ENCODE measurements at regions of chr2 and their contacts with region 1.

Region 1: DNA sequence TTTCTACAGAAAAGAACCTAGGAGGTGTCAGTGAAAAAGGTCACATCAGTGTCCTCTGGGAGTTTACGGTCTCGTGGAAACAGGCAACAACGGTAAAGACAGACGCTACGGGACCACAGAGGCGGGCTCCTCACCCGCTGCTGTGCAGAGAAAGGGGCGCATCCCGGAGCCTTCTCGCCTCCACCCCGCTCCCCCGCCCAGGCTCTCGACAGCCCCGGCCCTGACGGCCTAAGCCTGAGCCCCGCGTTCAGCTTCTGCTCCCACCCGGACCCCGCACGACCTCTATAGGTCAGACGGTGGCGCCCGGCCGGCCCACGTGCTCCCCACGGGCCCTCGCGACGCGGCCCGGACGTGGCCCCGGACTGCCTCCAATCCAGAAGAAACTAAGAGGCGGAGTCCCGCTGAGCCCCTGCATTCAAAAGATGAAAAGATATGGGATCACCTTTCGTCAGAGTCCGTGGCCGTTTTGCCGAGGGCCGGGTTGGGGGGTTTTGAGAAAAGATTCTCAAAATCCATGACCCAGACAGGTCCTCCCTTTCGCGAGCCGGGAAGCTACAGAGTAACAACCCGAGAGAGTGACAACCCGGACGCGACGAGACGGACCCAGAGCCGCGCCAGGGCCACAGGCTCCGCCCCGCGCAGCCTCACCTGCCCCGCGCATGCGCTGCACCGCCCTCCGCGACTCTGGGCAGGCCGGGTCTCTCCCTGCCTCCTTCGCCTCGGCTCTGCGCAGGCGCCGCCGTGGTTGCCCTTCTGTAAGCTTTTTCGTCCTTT is at the start of gene ZC3H8:
- DNase-seq: peak; percentile 93 to 98 (median 96)
- ATAC-seq: peak; percentile 97 to 99 (median 99)
- H3K4me3 ChIP-seq: peak within 1 kb of the TSS; percentile 27 to 91 (median 74)
- H3K27ac ChIP-seq: peak within 1 kb of the TSS; percentile 37 to 93 (median 85)
- H3K4me1 ChIP-seq: peaks cover 0 to 32% (median 12%) of the 10 kb centered on the region in 12 donors
- H3K27me3 ChIP-seq: no peaks in the 10 kb centered on the region
- CTCF ChIP-seq: peak in 2 of 12 donors; percentile 6 to 16
- POLR2A ChIP-seq: peak; percentile 40 to 89
- total RNA-seq, gene ZC3H8: 5.1 to 12.2 (median 8.1) TPM

Region 2: GRCh38 chr2:111897924-111898702 is 356.5 kb before region 1 on chr2 and contains the start of gene MERTK:
- intact Hi-C with region 1: loop called in 2 of 10 experiments (anchors 10 kb)
- DNase-seq: peak; percentile 90 to 95 (median 91)
- ATAC-seq: peak; percentile 90 to 95 (median 94)
- H3K4me3 ChIP-seq: peak within 1 kb of the TSS; percentile 52 to 98 (median 89)
- H3K27ac ChIP-seq: peak within 1 kb of the TSS; percentile 61 to 95 (median 92)
- H3K4me1 ChIP-seq: peaks cover 0 to 46% (median 20%) of the 10 kb centered on the region in 12 donors
- H3K27me3 ChIP-seq: no peaks in the 10 kb centered on the region
- CTCF ChIP-seq: peak; percentile 32 to 86 (median 67)
- POLR2A ChIP-seq: peak in 1 of 2 donors; percentile 65
- total RNA-seq, gene MERTK: 1.9 to 15.2 (median 4.9) TPM

Region 3: GRCh38 chr2:112121682-112122254 is 132.9 kb before region 1 on chr2:
- intact Hi-C with region 1: loop called in 5 of 10 experiments (anchors 5 to 10 kb)
- DNase-seq: no peak
- ATAC-seq: no peak
- H3K4me3 ChIP-seq: no peak overlapping the region
- H3K27ac ChIP-seq: no peak overlapping the region
- H3K4me1 ChIP-seq: no peaks in the 10 kb centered on the region
- H3K27me3 ChIP-seq: no peaks in the 10 kb centered on the region
- CTCF ChIP-seq: peak; percentile 42 to 72 (median 64)
- POLR2A ChIP-seq: no peak

Region 4: GRCh38 chr2:112204411-112204810 is 50.2 kb before region 1 on chr2:
- intact Hi-C with region 1: no loop called
- DNase-seq: no peak
- ATAC-seq: no peak
- H3K4me3 ChIP-seq: no peak overlapping the region
- H3K27ac ChIP-seq: no peak overlapping the region
- H3K4me1 ChIP-seq: no peaks in the 10 kb centered on the region
- H3K27me3 ChIP-seq: no peaks in the 10 kb centered on the region
- CTCF ChIP-seq: no peak
- POLR2A ChIP-seq: no peak

Region 5: DNA sequence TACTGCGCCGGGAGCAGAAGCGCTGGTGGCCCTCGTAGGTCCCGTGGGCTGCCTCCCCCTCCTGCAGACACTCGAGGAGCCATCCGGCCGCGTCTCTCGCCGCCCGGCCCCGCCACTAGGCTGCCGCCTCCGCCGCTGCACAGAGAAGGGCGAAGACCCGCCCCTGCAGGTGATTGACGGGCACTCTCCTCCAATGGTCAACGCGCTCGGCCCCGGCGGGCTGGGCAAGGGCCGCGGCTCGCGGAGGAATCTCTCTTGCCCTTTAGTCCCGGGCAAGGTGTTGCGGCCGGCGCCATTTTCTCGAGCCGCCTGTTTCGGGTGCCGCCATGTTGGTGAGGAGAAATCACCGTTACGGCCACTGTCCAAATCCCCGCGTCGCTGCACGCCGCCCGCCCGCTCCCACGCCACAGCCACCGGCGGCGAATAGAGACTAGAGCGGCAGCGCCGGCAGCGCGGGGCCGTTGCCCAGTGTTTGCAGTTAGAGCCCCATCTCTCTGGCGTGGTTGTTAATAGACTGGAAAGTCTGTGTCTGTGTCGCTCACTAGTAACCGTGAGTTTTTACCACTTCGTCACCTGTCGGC is 20.7 kb after region 1 on chr2 and contains the start of gene ZC3H6:
- intact Hi-C with region 1: loop called in 3 of 10 experiments (anchors 1 to 2 kb)
- DNase-seq: peak; percentile 99 to 100 (median 99)
- ATAC-seq: peak; percentile 98 to 100 (median 99)
- H3K4me3 ChIP-seq: peak within 1 kb of the TSS; percentile 79 to 99 (median 86)
- H3K27ac ChIP-seq: peak within 1 kb of the TSS; percentile 96 to 100 (median 100)
- H3K4me1 ChIP-seq: peaks cover 0 to 25% (median 9%) of the 10 kb centered on the region in 12 donors
- H3K27me3 ChIP-seq: no peaks in the 10 kb centered on the region
- CTCF ChIP-seq: peak in 3 of 12 donors; percentile 16 to 36 (median 26)
- POLR2A ChIP-seq: peak in 1 of 2 donors; percentile 93
- total RNA-seq, gene ZC3H6: 11.3 to 30.1 (median 18.0) TPM

Region 6: DNA sequence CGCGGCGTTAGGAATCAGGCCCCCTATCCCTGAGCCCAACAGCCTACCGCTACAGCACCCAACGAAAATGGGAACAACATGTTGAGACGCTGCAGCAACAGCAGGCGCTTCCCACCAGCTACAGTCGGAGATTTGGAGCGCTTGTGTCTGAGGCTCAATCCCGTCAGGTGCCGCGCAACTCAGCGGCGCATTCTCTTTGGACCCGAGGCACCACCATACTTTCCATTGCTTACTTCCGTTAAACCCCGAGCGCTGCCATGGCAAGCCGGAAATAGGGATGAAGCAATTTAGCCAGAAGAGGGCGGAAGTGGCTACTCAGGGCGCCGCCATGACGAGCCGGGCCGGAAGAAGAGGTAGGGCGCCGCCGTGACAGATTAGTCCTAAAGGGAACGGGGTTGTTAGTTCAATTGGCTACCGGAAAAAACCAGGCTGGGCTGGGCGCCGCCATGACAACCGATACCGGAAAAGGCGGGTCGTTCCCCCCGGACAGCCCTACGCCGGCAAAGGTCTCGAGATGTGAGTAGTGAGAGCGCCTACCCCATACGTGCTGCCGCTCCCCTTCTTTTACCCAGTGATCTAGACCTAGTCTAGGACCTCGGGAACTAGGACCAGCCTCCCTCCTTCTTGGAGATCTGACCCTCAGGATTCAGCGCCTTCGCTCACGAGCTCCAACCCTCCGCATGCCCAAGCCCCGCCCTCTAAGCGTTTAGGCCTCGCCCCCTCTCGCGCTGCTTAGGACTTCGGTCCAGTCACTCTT is 329.7 kb after region 1 on chr2 and contains the start of gene CHCHD5:
- intact Hi-C with region 1: loop called in 1 of 10 experiments (anchors 10 kb)
- DNase-seq: peak; percentile 94 to 96 (median 95)
- ATAC-seq: peak; percentile 91 to 96 (median 94)
- H3K4me3 ChIP-seq: peak within 1 kb of the TSS; percentile 59 to 82 (median 69)
- H3K27ac ChIP-seq: peak within 1 kb of the TSS; percentile 79 to 97 (median 92)
- H3K4me1 ChIP-seq: peaks cover 4 to 37% (median 18%) of the 10 kb centered on the region in 12 donors
- H3K27me3 ChIP-seq: no peaks in the 10 kb centered on the region
- CTCF ChIP-seq: peak in 11 of 12 donors; percentile 12 to 66 (median 39)
- POLR2A ChIP-seq: peak in 1 of 2 donors; percentile 53
- total RNA-seq, gene CHCHD5: 18.6 to 26.2 (median 22.1) TPM

Measured in heart left ventricle (tissue), 16 donors.